GM12878 (cell line): ENCODE measurements at regions of chr19 and their contacts with region 1.

Region 1: DNA sequence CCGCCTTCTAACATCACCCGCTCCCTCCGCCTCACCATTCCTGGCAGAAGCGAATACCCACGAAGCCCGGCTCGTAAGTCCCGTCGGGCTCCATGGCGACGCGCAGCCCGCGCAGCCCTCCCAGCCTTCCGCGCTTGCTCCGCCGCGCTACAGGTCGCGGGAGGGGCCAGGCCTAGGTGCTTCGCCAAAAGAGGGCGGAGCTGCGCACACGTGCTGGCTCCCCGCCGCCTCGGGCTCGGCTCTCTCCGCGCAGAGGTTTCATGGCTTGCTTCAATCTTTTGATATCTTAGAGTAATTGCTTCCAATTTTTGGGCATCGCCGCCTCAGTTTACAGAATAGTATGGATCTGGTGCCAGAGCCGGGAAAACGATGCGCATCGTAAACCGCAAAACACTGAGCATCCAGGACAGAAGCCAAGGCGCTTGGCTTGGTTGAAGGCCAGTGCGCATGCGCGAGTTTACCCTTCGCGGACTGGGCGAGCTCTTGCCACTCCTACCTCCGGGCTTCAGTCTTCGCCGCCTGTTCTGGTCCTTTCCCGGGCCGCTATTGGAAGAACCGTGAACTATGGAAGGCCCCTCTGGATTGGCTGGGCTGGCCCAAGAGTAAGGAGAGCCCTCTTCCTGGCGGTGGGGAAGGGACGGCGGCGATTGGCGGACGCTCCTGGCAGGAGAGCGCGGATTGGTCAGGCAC is at the start of gene POLR2I:
- DNase-seq: peak; percentile 97
- ATAC-seq: peak; percentile 94
- H3K4me3 ChIP-seq: peak within 1 kb of the TSS; percentile 89
- H3K27ac ChIP-seq: peak within 1 kb of the TSS; percentile 80
- H3K4me1 ChIP-seq: peaks cover 9% of the 10 kb centered on the region
- H3K27me3 ChIP-seq: no peaks in the 10 kb centered on the region
- CTCF ChIP-seq: no peak
- EP300 ChIP-seq: no peak
- POLR2A ChIP-seq: peak; percentile 85
- RAD21 ChIP-seq: no peak
- polyA plus RNA-seq, gene POLR2I: 235 to 269 TPM

Region 2: GRCh38 chr19:36132489-36132891 is 17.6 kb after region 1 on chr19:
- CTCF ChIA-PET with region 1: interaction called, 10 read pairs
- POLR2A ChIA-PET with region 1: interaction called, 7 read pairs
- RAD21 ChIA-PET with region 1: interaction called, 3 read pairs
- SMC1A ChIA-PET with region 1: interaction called, 12 read pairs
- in situ Hi-C with region 1: no loop called
- intact Hi-C with region 1: no loop called
- DNase-seq: peak; percentile 43
- ATAC-seq: peak; percentile 37
- H3K4me3 ChIP-seq: no peak overlapping the region
- H3K27ac ChIP-seq: no peak overlapping the region
- H3K4me1 ChIP-seq: peaks cover 5% of the 10 kb centered on the region
- H3K27me3 ChIP-seq: no peaks in the 10 kb centered on the region
- CTCF ChIP-seq: no peak
- EP300 ChIP-seq: no peak
- POLR2A ChIP-seq: no peak
- RAD21 ChIP-seq: no peak

Region 3: DNA sequence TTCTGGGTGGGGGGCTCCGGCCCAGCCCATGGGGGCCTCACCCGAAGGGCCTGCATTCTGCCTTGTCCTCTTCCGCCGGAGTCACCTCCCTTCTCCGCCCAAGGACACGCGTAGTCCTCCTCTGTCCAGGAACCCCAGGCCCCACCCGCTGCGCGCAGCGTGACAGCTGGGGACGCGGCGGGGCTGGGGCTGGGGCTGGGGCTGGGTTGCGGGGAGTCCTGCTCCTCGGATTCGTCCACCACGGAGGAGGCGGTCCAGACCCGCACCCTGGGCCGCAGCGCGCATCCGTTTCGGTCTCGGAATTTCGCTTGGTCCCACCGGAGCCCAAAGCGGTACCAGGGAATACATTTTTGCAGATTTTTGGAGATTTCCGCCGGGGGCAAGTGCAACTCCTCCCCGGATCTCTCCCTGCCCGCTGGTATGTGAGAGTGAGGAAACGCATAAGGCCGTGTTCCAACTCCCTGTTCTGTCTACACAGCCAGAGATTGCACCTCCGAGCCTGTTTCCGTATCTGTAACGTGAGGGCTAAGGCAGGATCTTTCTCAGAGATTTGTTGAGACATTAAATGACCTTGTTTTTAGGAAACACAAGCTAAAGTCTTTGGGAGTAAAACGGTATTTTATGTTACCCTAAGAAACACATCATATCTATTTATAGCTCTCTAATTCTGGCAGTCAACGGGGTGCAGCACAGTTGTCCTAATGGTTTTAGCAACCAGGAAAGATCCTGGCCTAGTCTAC is 37.6 kb after region 1 on chr19 and contains the start of gene COX7A1:
- CTCF ChIA-PET with region 1: no interaction called
- POLR2A ChIA-PET with region 1: no interaction called
- RAD21 ChIA-PET with region 1: no interaction called
- SMC1A ChIA-PET with region 1: no interaction called
- in situ Hi-C with region 1: no loop called
- intact Hi-C with region 1: no loop called
- DNase-seq: no peak
- ATAC-seq: no peak
- H3K4me3 ChIP-seq: no peak within 1 kb of the TSS
- H3K27ac ChIP-seq: no peak within 1 kb of the TSS
- H3K4me1 ChIP-seq: no peaks in the 10 kb centered on the region
- H3K27me3 ChIP-seq: no peaks in the 10 kb centered on the region
- CTCF ChIP-seq: no peak
- EP300 ChIP-seq: no peak
- POLR2A ChIP-seq: peak; percentile 30; the same call in 1 of the 2 replicates
- RAD21 ChIP-seq: no peak
- polyA plus RNA-seq, gene COX7A1: not detected

Region 4: DNA sequence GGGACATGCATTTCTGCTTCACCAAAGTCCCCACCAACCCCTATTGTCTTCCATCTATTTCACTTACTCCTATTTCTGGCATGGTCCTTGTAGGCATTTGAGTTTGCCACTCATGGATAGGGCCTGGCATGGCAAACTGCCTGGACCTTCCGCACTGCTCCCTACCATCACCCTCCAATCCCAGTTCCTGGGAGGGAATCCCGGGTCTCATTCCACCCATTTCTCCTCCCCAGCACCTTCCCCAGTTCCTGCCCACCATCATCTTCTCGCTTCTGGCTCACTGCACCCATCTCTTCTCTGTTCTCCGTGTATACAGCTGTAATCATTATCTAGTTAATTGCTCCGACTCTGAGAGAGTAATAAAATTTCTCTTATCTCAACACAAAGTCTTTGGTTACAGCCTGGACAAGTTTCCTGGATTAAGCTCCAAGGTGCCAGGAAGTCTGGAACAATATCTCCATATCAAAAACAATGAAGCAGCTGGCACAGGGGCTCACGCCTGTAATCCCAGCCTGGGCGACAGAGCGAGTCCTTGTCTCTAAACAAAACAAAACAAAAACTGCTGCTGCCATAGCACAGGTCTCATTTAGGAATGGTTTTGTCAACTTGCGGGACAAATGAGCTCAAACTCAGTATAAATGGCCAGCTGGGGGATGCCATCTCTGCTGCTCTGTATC is 54.3 kb after region 1 on chr19:
- CTCF ChIA-PET with region 1: interaction called, 6 read pairs
- POLR2A ChIA-PET with region 1: no interaction called
- RAD21 ChIA-PET with region 1: interaction called, 3 read pairs
- SMC1A ChIA-PET with region 1: no interaction called
- in situ Hi-C with region 1: no loop called
- intact Hi-C with region 1: loop called (anchors 1 kb)
- DNase-seq: no peak
- ATAC-seq: no peak
- H3K4me3 ChIP-seq: no peak overlapping the region
- H3K27ac ChIP-seq: no peak overlapping the region
- H3K4me1 ChIP-seq: no peaks in the 10 kb centered on the region
- H3K27me3 ChIP-seq: no peaks in the 10 kb centered on the region
- CTCF ChIP-seq: no peak
- EP300 ChIP-seq: no peak
- POLR2A ChIP-seq: no peak
- RAD21 ChIP-seq: no peak

Region 5: GRCh38 chr19:36489118-36489919 is 374.4 kb after region 1 on chr19 and contains the start of gene ZNF566:
- CTCF ChIA-PET with region 1: no interaction called
- POLR2A ChIA-PET with region 1: no interaction called
- RAD21 ChIA-PET with region 1: no interaction called
- SMC1A ChIA-PET with region 1: no interaction called
- in situ Hi-C with region 1: loop called (anchors 10 kb)
- intact Hi-C with region 1: no loop called
- DNase-seq: peak; percentile 92
- ATAC-seq: peak; percentile 96
- H3K4me3 ChIP-seq: peak within 1 kb of the TSS; percentile 79
- H3K27ac ChIP-seq: peak within 1 kb of the TSS; percentile 93
- H3K4me1 ChIP-seq: no peaks in the 10 kb centered on the region; the same call in 1 of the 2 replicates
- H3K27me3 ChIP-seq: no peaks in the 10 kb centered on the region
- CTCF ChIP-seq: no peak
- EP300 ChIP-seq: no peak
- POLR2A ChIP-seq: peak; percentile 78
- RAD21 ChIP-seq: no peak
- polyA plus RNA-seq, gene ZNF566: 2.5 to 4.0 TPM